Panc1 (cell line): ENCODE measurements at regions of chr7 and their contacts with region 1.

Region 1: GRCh38 chr7:56074371-56074791 is 10.3 kb downstream of the SUMF2 start:
- DNase-seq: no peak
- ATAC-seq: peak; percentile 96
- H3K4me3 ChIP-seq: no peak overlapping the region
- H3K27ac ChIP-seq: peak overlapping the region; percentile 35
- H3K4me1 ChIP-seq: peaks cover 10% of the 10 kb centered on the region
- H3K27me3 ChIP-seq: no peaks in the 10 kb centered on the region
- CTCF ChIP-seq: peak; percentile 98

Region 2: DNA sequence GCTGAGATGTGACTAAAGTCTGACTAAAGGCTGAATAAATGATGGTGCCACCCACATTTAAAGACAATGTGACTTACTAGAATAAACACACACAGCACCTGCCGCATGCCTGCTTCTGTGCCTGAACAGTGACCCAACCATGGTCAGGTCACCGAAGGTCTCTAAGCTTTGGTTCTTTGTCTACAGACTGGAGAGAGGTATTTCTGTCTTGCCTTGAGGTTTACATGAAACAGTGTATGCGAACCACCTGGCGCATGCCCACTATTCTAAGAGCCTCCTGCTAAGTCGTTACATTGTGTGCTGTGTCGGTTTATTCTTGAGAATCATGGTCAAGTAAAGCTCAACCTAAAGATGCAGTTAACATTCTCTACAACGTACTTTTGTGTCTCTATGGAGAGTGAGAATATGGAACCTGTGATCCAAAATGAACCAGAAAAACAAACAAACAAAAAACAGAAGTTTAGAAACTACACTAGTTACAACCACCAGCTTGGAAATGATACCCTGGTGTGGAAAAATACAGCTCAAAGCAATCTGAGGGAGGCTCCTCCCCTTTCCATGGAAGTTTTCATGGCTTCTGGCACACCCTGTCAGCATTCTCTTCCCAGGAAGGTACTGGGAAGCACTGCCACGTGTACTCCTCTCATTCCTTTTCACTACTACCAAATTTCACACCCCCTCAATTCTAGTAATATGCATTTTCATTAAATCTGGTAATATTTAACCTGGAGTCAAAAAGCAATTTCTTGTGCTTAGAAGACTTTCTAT is 542.0 kb before region 1 on chr7:
- CTCF ChIA-PET with region 1: interaction called, 12 read pairs
- POLR2A ChIA-PET with region 1: no interaction called
- in situ Hi-C with region 1: no loop called
- intact Hi-C with region 1: no loop called
- DNase-seq: no peak
- ATAC-seq: no peak
- H3K4me3 ChIP-seq: no peak overlapping the region
- H3K27ac ChIP-seq: no peak overlapping the region
- H3K4me1 ChIP-seq: peaks cover 35% of the 10 kb centered on the region
- H3K27me3 ChIP-seq: no peaks in the 10 kb centered on the region
- CTCF ChIP-seq: no peak

Region 3: DNA sequence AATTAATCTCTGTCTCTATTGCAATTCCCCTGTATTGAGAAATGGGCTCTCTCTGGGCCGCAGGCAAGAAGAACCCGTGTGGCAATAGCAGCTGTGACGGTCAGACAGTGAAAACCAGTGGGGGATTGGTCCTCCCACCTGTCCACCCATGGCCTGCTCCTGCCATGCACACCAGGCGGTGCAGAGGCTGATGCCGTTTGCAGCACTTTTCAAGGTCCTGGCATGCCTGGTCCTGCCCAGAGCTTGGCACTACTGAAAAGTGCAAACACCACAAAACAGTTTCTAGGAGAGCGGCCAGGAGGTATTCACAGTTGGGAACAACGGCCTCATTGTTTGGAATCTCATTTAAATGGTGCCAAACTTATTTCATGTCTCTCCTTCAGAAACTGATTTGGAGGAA is 64.7 kb before region 1 on chr7:
- CTCF ChIA-PET with region 1: no interaction called
- POLR2A ChIA-PET with region 1: no interaction called
- in situ Hi-C with region 1: no loop called
- intact Hi-C with region 1: loop called (anchors 2 kb)
- DNase-seq: no peak
- ATAC-seq: peak; percentile 78
- H3K4me3 ChIP-seq: no peak overlapping the region
- H3K27ac ChIP-seq: peak overlapping the region; percentile 82
- H3K4me1 ChIP-seq: peaks cover 40% of the 10 kb centered on the region
- H3K27me3 ChIP-seq: no peaks in the 10 kb centered on the region
- CTCF ChIP-seq: no peak